Activated CD4-positive, alpha-beta memory T cell treated with anti-CD3 and anti-CD28 coated beads, Interleukin-2, amount 10 ng/mL, durations not matched to agents 7 days and 5 days (primary cell): ENCODE measurements at regions of chr20 and their contacts with region 1.

Region 1: GRCh38 chr20:5557123-5557522 is 193.1 kb upstream of the SHLD1 start:
- DNase-seq: peak; percentile 68
- H3K4me3 Mint-ChIP-seq: no peak overlapping the region
- H3K27ac Mint-ChIP-seq: no peak overlapping the region
- H3K4me1 Mint-ChIP-seq: peaks cover 3% of the 10 kb centered on the region
- H3K27me3 Mint-ChIP-seq: no peaks in the 10 kb centered on the region

Region 2: GRCh38 chr20:5430670-5431069 is 126.5 kb before region 1 on chr20:
- CTCF ChIA-PET with region 1: no interaction called
- POLR2A ChIA-PET with region 1: no interaction called
- DNase-seq: no peak
- H3K4me3 Mint-ChIP-seq: no peak overlapping the region
- H3K27ac Mint-ChIP-seq: no peak overlapping the region
- H3K4me1 Mint-ChIP-seq: no peaks in the 10 kb centered on the region
- H3K27me3 Mint-ChIP-seq: peaks cover 6% of the 10 kb centered on the region

Region 3: GRCh38 chr20:5654557-5654956 is 97.4 kb after region 1 on chr20:
- CTCF ChIA-PET with region 1: no interaction called
- POLR2A ChIA-PET with region 1: no interaction called
- DNase-seq: no peak
- H3K4me3 Mint-ChIP-seq: no peak overlapping the region
- H3K27ac Mint-ChIP-seq: no peak overlapping the region
- H3K4me1 Mint-ChIP-seq: peaks cover 10% of the 10 kb centered on the region
- H3K27me3 Mint-ChIP-seq: no peaks in the 10 kb centered on the region

Region 4: GRCh38 chr20:5788385-5788895 is 231.3 kb after region 1 on chr20:
- CTCF ChIA-PET with region 1: interaction called, 33 read pairs
- POLR2A ChIA-PET with region 1: no interaction called
- DNase-seq: peak; percentile 76
- H3K4me3 Mint-ChIP-seq: no peak overlapping the region
- H3K27ac Mint-ChIP-seq: no peak overlapping the region
- H3K4me1 Mint-ChIP-seq: peaks cover 2% of the 10 kb centered on the region
- H3K27me3 Mint-ChIP-seq: no peaks in the 10 kb centered on the region